Activated naive CD4-positive, alpha-beta T cell treated with anti-CD3 and anti-CD28 coated beads, Interleukin-2, amount 10 ng/mL, durations not matched to agents 7 days and 5 days (primary cell): ENCODE measurements at regions of chr1 and their contacts with region 1.

Region 1: GRCh38 chr1:31705080-31705866 is 1.5 kb upstream of the COL16A1 start:
- DNase-seq: peak; percentile 63
- H3K4me3 Mint-ChIP-seq: no peak overlapping the region
- H3K27ac Mint-ChIP-seq: no peak overlapping the region
- H3K4me1 Mint-ChIP-seq: peaks cover 23% of the 10 kb centered on the region
- H3K27me3 Mint-ChIP-seq: peaks cover 83% of the 10 kb centered on the region

Region 2: DNA sequence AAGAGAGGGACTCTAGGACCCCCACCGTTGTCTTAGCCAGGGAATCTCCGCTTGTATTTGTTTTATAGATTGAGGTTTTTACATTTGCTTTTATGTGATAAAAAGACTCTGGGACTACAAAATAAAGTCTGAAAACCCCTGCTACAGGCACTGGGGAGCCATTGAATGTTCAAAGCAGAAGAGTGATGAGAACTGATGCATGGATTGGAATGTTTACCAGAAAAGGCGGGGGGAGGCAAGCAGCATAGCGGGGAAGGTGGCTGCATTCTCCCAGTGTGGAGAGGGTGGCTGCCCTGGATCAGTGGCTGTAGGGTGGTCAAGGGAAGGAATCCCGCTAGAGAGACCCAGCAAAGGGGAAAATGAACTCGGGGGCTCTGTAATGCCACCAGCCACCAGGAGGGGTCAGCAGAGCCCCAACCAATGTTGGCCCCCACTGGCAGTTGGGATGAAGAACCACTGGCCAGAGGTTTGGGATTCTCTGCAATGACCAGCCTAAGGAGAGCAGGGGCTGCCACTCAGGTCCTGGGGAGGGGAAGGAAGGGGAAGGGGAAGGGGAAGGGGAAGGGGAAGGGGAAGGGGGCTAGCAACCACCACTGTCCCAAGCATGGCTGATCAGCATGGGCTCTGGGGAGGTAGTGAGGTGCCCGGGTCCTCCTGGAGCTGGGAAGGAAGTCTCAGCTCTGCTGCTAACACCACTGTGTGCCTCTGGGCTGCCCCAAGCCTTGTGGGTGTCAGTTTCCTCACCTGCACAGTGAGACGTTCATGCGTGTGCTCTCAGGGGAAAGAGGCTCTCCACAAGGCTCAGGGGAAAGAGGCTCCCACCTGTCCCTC is 41.4 kb before region 1 on chr1:
- CTCF ChIA-PET with region 1: interaction called, 23 read pairs
- DNase-seq: peak; percentile 61
- H3K4me3 Mint-ChIP-seq: no peak overlapping the region
- H3K27ac Mint-ChIP-seq: no peak overlapping the region
- H3K4me1 Mint-ChIP-seq: no peaks in the 10 kb centered on the region
- H3K27me3 Mint-ChIP-seq: peaks cover 44% of the 10 kb centered on the region

Region 3: GRCh38 chr1:31736671-31737070 is 31.4 kb after region 1 on chr1:
- CTCF ChIA-PET with region 1: no interaction called
- DNase-seq: no peak
- H3K4me3 Mint-ChIP-seq: no peak overlapping the region
- H3K27ac Mint-ChIP-seq: no peak overlapping the region
- H3K4me1 Mint-ChIP-seq: peaks cover 6% of the 10 kb centered on the region
- H3K27me3 Mint-ChIP-seq: peaks cover 4% of the 10 kb centered on the region